ENCODE measurements at regions of chr11 and their contacts with region 1.

Region 1: GRCh38 chr11:25515576-25515975 is 816.4 kb upstream of the ANO3 start:
- DNase-seq: no peak
- ATAC-seq: no peak
- H3K4me3 ChIP-seq: no peak overlapping the region
- H3K27ac ChIP-seq: no peak overlapping the region
- H3K4me1 ChIP-seq: no peaks in the 10 kb centered on the region
- H3K27me3 ChIP-seq: no peaks in the 10 kb centered on the region
- CTCF ChIP-seq: no peak
- POLR2A ChIP-seq: no peak

Region 2: GRCh38 chr11:25449091-25449490 is 66.5 kb before region 1 on chr11:
- intact Hi-C with region 1: no loop called
- DNase-seq: no peak
- ATAC-seq: no peak
- H3K4me3 ChIP-seq: no peak overlapping the region
- H3K27ac ChIP-seq: no peak overlapping the region
- H3K4me1 ChIP-seq: no peaks in the 10 kb centered on the region
- H3K27me3 ChIP-seq: no peaks in the 10 kb centered on the region
- CTCF ChIP-seq: no peak
- POLR2A ChIP-seq: no peak

Region 3: GRCh38 chr11:25562417-25562816 is 46.8 kb after region 1 on chr11:
- intact Hi-C with region 1: no loop called
- DNase-seq: peak in 2 of 5 donors; percentile 15 to 30
- ATAC-seq: peak in 3 of 4 donors; percentile 75 to 87 (median 80)
- H3K4me3 ChIP-seq: no peak overlapping the region
- H3K27ac ChIP-seq: no peak overlapping the region
- H3K4me1 ChIP-seq: peaks cover 0 to 7% (median 0%) of the 10 kb centered on the region in 12 donors
- H3K27me3 ChIP-seq: no peaks in the 10 kb centered on the region
- CTCF ChIP-seq: no peak
- POLR2A ChIP-seq: no peak

Region 4: GRCh38 chr11:25576320-25576719 is 60.7 kb after region 1 on chr11:
- intact Hi-C with region 1: loop called in 1 of 10 experiments (anchors 10 kb)
- DNase-seq: no peak
- ATAC-seq: no peak
- H3K4me3 ChIP-seq: no peak overlapping the region
- H3K27ac ChIP-seq: no peak overlapping the region
- H3K4me1 ChIP-seq: no peaks in the 10 kb centered on the region
- H3K27me3 ChIP-seq: no peaks in the 10 kb centered on the region
- CTCF ChIP-seq: no peak
- POLR2A ChIP-seq: no peak

Region 5: GRCh38 chr11:25702417-25702816 is 186.8 kb after region 1 on chr11:
- intact Hi-C with region 1: no loop called
- DNase-seq: no peak
- ATAC-seq: no peak
- H3K4me3 ChIP-seq: no peak overlapping the region
- H3K27ac ChIP-seq: no peak overlapping the region
- H3K4me1 ChIP-seq: no peaks in the 10 kb centered on the region
- H3K27me3 ChIP-seq: no peaks in the 10 kb centered on the region
- CTCF ChIP-seq: no peak
- POLR2A ChIP-seq: no peak